SK-N-SH (cell line): ENCODE measurements at regions of chr7 and their contacts with region 1.

Region 1: GRCh38 chr7:139075031-139075652 is 34.4 kb downstream of the ZC3HAV1 start:
- DNase-seq: peak; percentile 84
- H3K4me3 ChIP-seq: peak overlapping the region in 1 of 2 experiments; percentile 2; a peak in 1 of 4 replicates
- H3K27ac ChIP-seq: peak overlapping the region; percentile 23 to 52; a peak in 2 of 4 replicates
- H3K4me1 ChIP-seq: peaks cover 0 to 3% of the 10 kb centered on the region in 2 experiments; a peak in 2 of 4 replicates
- H3K27me3 ChIP-seq: no peaks in the 10 kb centered on the region
- CTCF ChIP-seq: peak; percentile 99
- EP300 ChIP-seq: no peak
- RAD21 ChIP-seq: peak; percentile 97

Region 2: DNA sequence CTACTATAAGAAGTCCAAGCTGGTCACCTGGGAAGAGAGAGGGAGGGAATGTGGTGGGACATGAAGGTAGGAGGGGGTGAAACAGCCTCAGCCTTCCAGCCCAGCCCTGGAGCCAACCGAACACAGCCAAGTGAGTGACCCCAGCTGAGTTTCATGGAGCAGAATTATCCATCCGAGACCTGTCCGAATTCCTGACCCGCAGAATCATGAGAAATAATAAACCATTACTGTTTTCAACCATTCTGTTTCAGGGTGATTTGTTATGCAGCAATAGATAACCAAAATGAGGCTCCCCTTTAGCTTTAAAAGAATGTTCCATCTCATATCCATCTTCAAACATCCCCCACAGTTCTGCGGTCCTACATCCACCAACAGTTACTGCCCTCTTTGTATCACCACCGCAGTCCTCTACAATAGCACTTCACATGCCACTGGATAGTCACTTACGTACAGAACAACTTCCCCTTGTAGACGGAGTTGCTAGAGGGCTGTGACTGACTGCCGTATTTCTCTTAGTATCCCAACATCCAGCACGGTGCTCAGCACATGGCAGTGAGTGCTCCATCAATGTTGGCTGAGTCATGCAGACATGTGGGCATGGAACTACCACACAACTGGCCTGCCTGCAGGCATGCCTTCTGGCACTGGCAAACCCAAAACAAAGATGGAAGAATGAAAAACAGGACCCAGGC is 112.4 kb before region 1 on chr7:
- CTCF ChIA-PET with region 1: no interaction called
- POLR2A ChIA-PET with region 1: no interaction called
- DNase-seq: no peak
- H3K4me3 ChIP-seq: no peak overlapping the region
- H3K27ac ChIP-seq: no peak overlapping the region; a peak in 1 of 4 replicates
- H3K4me1 ChIP-seq: peaks cover 0 to 9% of the 10 kb centered on the region in 2 experiments; a peak in 1 of 4 replicates
- H3K27me3 ChIP-seq: no peaks in the 10 kb centered on the region
- CTCF ChIP-seq: no peak
- EP300 ChIP-seq: no peak
- RAD21 ChIP-seq: no peak

Region 3: GRCh38 chr7:139004321-139005075 is 70.6 kb before region 1 on chr7:
- CTCF ChIA-PET with region 1: interaction called, 10 read pairs
- POLR2A ChIA-PET with region 1: no interaction called
- DNase-seq: no peak
- H3K4me3 ChIP-seq: no peak overlapping the region
- H3K27ac ChIP-seq: no peak overlapping the region
- H3K4me1 ChIP-seq: no peaks in the 10 kb centered on the region
- H3K27me3 ChIP-seq: no peaks in the 10 kb centered on the region
- CTCF ChIP-seq: no peak
- EP300 ChIP-seq: no peak
- RAD21 ChIP-seq: no peak

Region 4: DNA sequence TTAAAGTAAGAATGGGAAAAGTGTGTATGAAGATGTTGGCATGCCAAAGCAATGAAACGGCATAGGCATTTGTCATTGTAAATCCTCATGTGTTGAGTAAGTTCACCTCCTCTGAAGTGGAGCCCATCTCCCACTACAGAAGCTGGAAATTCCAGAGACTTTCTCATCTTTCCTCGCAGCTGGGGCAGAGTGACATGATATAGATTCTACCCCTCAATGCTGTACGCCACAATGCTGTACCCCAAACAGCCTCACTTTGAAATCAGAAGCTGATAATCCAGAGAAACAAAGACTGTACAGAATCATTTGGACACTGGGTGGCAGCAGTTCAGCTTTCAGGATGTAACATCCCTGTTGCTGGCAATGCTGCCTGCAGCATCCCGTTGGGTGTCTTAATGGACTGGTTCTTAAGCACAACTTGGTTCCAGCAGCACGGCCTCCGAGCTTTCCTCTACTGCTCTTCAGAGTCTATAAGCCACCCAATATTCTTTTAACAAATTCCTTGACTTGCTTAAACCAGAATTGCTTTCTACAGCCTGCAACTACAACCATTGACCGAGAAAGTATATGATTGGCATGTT is 58.1 kb before region 1 on chr7:
- CTCF ChIA-PET with region 1: interaction called, 140 read pairs
- POLR2A ChIA-PET with region 1: no interaction called
- DNase-seq: peak; percentile 88
- H3K4me3 ChIP-seq: peak overlapping the region in 1 of 2 experiments; percentile 31; a peak in 1 of 4 replicates
- H3K27ac ChIP-seq: no peak overlapping the region
- H3K4me1 ChIP-seq: peaks cover 0 to 3% of the 10 kb centered on the region in 2 experiments; a peak in 2 of 4 replicates
- H3K27me3 ChIP-seq: 0 out of 2 replicates have a peak, but pooled peaks cover 4% of the 10 kb centered on the region
- CTCF ChIP-seq: peak; percentile 88
- EP300 ChIP-seq: no peak
- RAD21 ChIP-seq: peak; percentile 89

Region 5: DNA sequence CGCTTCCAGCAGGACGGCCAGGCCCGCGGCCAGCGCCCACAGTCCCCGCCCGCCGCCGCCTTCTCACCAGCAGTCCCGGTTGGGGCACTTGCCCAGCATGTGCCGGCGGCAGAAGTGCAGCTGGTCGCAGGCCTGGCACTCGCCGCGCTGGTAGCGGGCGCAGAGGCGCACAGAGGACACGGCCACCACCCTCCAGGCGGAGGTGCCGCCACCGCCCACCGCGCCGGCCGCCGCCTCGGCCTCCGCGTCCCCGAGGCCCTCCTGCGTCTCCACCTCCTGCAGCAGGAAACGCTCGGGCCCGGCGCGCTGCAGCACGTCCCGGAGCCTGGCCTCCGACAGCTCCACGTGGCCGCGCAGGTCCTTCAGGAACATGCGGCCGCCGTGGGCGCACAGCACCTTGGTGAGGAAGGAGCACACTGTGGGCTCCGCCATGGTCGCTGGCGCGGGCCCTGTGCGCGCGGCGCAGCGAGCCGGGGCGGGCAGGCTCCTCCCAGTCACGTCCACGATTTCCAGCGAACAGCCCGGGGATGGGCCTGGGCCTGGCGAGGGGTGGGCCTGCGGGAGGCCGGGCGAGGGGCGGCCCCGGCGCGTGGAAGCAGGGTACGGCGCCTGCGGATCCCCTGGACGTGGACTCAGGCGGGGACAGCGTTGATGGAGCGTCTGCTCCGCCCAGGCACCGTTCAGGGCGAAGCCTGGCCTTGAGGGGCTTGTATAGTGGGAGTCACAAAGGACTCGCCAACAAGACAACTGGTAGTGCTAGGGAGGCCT is 39.4 kb before region 1 on chr7 and contains the start of gene ZC3HAV1L:
- CTCF ChIA-PET with region 1: interaction called, 52 read pairs
- POLR2A ChIA-PET with region 1: no interaction called
- DNase-seq: peak; percentile 99
- H3K4me3 ChIP-seq: peak within 1 kb of the TSS; percentile 69 to 86
- H3K27ac ChIP-seq: peak within 1 kb of the TSS; percentile 54 to 87
- H3K4me1 ChIP-seq: peaks cover 9 to 20% of the 10 kb centered on the region in 2 experiments; a peak in 3 of 4 replicates
- H3K27me3 ChIP-seq: no peaks in the 10 kb centered on the region
- CTCF ChIP-seq: no peak
- EP300 ChIP-seq: peak in 1 of 2 experiments; percentile 5; a peak in 1 of 4 replicates
- RAD21 ChIP-seq: no peak
- polyA plus RNA-seq, gene ZC3HAV1L: 9.7 and 14.5 TPM in 2 replicates

Region 6: GRCh38 chr7:139058943-139059342 is 16.2 kb before region 1 on chr7:
- CTCF ChIA-PET with region 1: interaction called, 84 read pairs
- POLR2A ChIA-PET with region 1: interaction called, 3 read pairs
- DNase-seq: no peak
- H3K4me3 ChIP-seq: no peak overlapping the region
- H3K27ac ChIP-seq: no peak overlapping the region
- H3K4me1 ChIP-seq: peaks cover 5 to 8% of the 10 kb centered on the region in 2 experiments; a peak in 3 of 4 replicates
- H3K27me3 ChIP-seq: no peaks in the 10 kb centered on the region
- CTCF ChIP-seq: no peak
- EP300 ChIP-seq: no peak
- RAD21 ChIP-seq: no peak

Region 7: GRCh38 chr7:139095194-139095659 is 20.1 kb after region 1 on chr7:
- CTCF ChIA-PET with region 1: interaction called, 18 read pairs
- POLR2A ChIA-PET with region 1: no interaction called
- DNase-seq: no peak
- H3K4me3 ChIP-seq: no peak overlapping the region
- H3K27ac ChIP-seq: no peak overlapping the region
- H3K4me1 ChIP-seq: peaks cover 0 to 3% of the 10 kb centered on the region in 2 experiments; a peak in 1 of 4 replicates
- H3K27me3 ChIP-seq: no peaks in the 10 kb centered on the region
- CTCF ChIP-seq: no peak
- EP300 ChIP-seq: no peak
- RAD21 ChIP-seq: no peak